Esophagus muscularis mucosa (tissue), 4 donors: ENCODE measurements at regions of chr2 and their contacts with region 1.

Region 1: DNA sequence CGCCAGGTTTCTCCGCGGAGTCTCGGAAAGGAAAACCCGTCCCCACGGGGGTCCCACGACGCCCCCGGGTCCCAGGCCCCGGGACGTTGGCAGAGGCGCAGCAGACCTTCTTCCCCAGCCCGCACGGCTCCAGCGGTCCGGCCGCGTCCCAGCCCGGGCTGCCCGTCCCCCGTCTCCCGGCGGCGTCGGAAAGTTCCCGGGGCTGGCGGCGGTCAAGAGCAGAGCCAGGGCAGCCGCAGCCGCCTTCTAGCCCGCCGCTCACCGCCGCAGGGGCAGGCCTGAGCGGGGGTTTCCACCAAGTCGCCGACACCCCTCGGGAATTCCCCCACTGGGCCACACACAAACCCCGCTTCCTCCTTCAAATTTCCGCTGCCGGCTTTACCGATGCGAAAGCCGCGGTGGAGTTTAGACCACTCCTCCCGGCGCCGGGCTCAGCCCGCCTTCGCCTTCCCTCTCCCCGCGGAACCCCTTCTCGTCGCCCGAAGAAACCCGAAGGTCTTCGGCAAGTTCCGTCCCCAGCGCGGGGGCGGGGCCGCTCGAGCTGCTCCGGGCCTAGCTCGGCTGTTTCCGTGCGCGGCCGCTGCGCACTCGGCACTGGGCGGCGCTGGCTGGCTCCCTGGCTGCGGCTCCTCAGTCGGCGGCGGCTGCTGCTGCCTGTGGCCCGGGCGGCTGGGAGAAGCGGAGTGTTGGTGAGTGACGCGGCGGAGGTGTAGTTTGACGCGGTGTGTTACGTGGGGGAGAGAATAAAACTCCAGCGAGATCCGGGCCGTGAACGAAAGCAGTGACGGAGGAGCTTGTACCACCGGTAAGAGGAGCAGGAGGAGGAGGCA is at the start of gene CREB1:
- DNase-seq: peak; percentile 99
- H3K4me3 ChIP-seq: peak within 1 kb of the TSS; percentile 56 to 83 (median 76)
- H3K27ac ChIP-seq: peak within 1 kb of the TSS; percentile 86 to 98 (median 92)
- H3K4me1 ChIP-seq: peaks cover 36 to 49% (median 45%) of the 10 kb centered on the region in 4 donors
- H3K27me3 ChIP-seq: no peaks in the 10 kb centered on the region
- CTCF ChIP-seq: peak in 2 of 3 experiments; percentile 7 to 8
- EP300 ChIP-seq: peak; percentile 85
- POLR2A ChIP-seq: peak; percentile 31
- total RNA-seq, gene CREB1: 31.1 to 51.5 (median 43.3) TPM

Region 2: GRCh38 chr2:207166039-207166348 is 363.6 kb before region 1 on chr2:
- intact Hi-C with region 1: no loop called
- DNase-seq: peak; percentile 100
- H3K4me3 ChIP-seq: peak overlapping the region; percentile 78 to 90 (median 82)
- H3K27ac ChIP-seq: peak overlapping the region; percentile 100
- H3K4me1 ChIP-seq: peaks cover 32 to 42% (median 40%) of the 10 kb centered on the region in 4 donors
- H3K27me3 ChIP-seq: no peaks in the 10 kb centered on the region
- CTCF ChIP-seq: no peak
- EP300 ChIP-seq: no peak
- POLR2A ChIP-seq: no peak

Region 3: GRCh38 chr2:207375192-207375861 is 154.2 kb before region 1 on chr2:
- intact Hi-C with region 1: no loop called
- DNase-seq: no peak
- H3K4me3 ChIP-seq: no peak overlapping the region
- H3K27ac ChIP-seq: no peak overlapping the region
- H3K4me1 ChIP-seq: no peaks in the 10 kb centered on the region
- H3K27me3 ChIP-seq: no peaks in the 10 kb centered on the region
- CTCF ChIP-seq: no peak
- EP300 ChIP-seq: no peak
- POLR2A ChIP-seq: no peak

Region 4: DNA sequence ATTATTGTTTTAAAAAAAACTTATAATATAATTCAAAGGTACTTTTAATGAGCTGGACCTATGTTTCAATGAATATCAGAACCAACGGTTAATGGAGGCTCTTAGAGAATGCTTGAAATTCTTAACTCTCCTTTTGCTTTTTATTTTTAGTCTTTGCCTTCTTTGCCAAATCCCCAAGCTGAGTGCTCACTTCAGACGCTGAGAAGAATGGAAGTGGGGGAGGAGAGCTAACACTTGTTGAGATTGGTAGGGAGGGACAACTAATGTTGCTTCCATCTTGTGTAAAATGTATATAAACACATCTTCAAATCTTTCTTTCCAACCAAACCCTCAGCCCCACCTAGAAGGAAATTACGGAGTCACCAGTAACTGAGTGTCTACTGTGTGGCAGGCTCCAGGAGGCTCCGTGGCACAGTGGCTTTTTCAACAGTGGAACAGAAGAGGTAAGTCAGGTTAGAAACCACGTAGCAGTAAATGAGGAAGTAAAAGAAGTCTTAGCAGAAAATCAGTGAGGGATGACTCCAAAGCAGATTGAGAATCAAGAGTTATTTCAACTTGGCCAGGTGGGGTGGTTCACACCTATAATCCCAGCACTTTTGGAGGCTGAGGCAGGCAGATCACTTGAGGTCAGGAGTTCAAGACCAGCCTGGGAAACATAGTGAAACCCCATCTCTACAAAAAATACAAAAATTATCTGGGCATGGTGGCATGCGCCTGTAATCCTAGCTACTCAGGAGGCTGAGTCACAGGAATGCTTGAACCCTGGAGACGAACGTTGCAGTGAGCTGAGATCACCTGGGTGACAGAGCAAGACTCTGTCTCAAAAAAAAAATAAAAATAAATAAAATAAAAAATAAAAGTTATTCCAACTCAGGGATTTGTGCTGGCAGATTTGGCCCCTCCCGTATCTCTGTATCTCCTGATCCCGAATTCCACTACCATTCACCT is 44.8 kb before region 1 on chr2:
- intact Hi-C with region 1: loop called (anchors 5 kb)
- DNase-seq: peak; percentile 64
- H3K4me3 ChIP-seq: no peak overlapping the region
- H3K27ac ChIP-seq: peak overlapping the region; percentile 16 to 40 (median 35)
- H3K4me1 ChIP-seq: peaks cover 26 to 53% (median 44%) of the 10 kb centered on the region in 4 donors
- H3K27me3 ChIP-seq: no peaks in the 10 kb centered on the region
- CTCF ChIP-seq: no peak
- EP300 ChIP-seq: no peak
- POLR2A ChIP-seq: no peak

Region 5: DNA sequence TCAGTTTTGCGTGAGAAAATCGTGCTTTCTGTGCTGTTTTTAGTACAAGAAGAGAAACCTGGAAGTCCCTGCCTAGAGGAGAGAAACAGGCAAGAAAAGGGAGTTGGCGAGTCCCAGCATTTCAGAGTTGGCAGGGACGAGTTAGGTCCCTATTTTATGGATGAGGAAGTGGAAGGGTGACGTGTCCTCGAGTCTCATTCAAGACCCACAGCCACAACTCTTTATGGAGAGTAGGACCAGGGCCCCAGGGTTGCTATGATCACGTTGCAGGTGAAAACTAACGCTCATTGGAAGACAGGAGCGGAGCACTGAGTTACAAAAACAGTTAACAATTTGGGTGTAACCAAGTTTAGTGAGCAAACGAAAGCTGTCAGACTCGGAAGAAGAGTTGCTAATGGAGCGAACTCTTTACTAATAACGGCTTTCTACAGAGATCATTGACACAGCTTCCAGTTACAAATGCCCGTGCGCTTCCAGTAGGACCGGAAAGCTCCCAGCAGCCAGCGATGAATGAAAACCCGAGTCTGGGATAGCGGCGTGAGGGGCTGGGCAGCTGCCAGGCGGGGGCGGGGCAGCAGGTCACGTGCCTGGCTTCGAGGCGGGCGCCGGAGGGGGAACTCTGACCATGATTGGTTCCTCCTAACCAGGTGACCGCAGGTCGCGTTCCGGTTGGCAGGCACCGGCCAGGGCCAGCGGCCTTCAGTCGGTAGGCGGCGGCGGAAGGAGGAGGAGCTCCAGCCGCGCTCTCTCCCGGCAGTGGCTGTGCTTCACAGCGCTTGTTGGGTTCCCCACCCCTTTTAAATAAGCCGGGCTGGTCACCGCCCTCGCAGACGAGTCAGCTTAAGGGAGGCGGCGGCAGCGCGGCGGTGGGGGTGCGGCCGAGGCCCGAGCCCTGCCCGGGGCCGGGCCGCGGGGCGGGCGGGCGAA is 181.5 kb after region 1 on chr2 and contains the start of gene CCNYL1:
- intact Hi-C with region 1: loop called (anchors 5 kb)
- DNase-seq: peak; percentile 99
- H3K4me3 ChIP-seq: peak within 1 kb of the TSS; percentile 80 to 98 (median 90)
- H3K27ac ChIP-seq: peak within 1 kb of the TSS; percentile 91 to 97 (median 94)
- H3K4me1 ChIP-seq: peaks cover 9 to 31% (median 29%) of the 10 kb centered on the region in 4 donors
- H3K27me3 ChIP-seq: no peaks in the 10 kb centered on the region
- CTCF ChIP-seq: peak in 1 of 3 experiments; percentile 38
- EP300 ChIP-seq: no peak
- POLR2A ChIP-seq: peak; percentile 53
- total RNA-seq, gene CCNYL1: 13.5 to 17.4 (median 16.2) TPM